ENCODE measurements at regions of chr12 and their contacts with region 1.

Region 1: GRCh38 chr12:6890789-6891645 is 13.6 kb upstream of the LRRC23 start:
- DNase-seq: peak; percentile 74
- H3K4me3 ChIP-seq: peak overlapping the region; percentile 23
- H3K27me3 ChIP-seq: no peaks in the 10 kb centered on the region
- CTCF ChIP-seq: peak; percentile 58

Region 2: DNA sequence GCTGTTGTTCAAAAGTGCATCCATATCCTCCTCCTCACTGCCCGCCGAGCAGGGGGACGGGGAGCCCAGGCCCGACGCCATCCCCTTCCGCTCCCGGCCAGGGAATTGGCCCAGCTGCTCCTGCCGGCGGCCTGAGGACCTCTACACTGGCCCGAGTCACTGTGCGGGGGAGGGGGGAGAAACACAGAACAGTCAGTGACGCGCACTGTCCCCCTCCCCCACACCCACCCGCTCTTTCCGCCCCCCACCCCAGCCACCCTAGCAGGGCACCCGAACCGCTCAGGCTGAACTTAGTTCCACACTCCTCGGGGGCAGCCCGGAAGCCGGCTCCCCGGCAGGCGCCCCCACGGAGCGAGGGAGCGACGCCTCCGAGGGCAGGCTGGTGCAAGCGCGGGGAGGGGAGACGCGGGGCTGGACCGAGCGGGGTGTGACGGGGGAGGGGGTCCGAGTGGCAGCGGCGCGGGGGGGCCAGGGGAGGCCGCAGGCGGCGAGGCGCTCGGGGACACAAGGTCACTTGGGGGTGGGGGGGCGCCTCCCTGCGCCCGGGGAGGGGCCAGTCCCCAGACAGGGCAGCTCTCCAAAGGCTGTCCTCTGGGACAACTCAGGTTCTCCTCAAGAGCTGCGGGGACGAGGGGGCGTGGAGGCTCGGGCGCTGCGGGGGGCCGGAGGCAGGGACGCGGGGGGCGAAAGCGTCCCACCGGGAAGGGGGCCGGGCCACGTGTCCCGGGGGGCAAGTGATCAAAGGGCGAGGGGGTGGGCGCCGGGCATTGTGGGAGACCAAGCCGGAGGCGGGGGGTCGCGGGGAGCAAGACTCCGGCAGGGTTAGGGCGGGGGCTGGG is 284.5 kb before region 1 on chr12:
- CTCF ChIA-PET with region 1: no interaction called
- POLR2A ChIA-PET with region 1: interaction called, 17 read pairs
- DNase-seq: no peak
- H3K4me3 ChIP-seq: peak overlapping the region; percentile 98
- H3K27me3 ChIP-seq: no peaks in the 10 kb centered on the region
- CTCF ChIP-seq: no peak

Region 3: DNA sequence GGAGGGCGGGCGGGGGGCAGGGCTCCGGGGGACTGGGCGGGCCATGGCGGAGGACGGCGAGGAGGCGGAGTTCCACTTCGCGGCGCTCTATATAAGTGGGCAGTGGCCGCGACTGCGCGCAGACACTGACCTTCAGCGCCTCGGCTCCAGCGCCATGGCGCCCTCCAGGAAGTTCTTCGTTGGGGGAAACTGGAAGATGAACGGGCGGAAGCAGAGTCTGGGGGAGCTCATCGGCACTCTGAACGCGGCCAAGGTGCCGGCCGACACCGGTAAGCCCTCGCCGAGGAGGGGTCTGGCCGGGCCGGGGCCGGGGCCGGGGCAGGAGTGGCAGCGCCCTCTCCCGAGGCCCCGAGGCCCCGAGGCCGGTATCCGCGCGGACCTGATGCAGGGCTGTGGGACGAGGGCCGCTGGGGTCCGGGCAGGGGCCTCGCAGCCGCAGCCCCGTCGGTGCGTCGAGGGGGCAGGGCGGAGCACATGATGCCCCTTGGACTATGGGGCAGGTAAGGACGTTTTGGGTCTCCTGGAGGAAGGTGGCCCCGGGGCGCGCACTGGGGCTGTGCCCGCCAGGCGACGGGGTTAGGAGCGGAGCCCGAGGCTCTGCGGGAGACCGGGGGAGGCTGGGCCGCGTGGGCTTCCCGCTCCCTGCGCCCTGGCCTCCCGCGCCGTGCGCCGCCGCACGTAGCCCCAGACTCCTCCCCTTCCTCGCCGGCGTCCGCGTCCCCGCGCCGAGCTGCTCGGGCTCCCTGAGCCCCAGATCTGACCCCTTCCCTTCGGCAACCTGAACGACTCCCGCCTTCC is 23.4 kb before region 1 on chr12 and contains the start of gene TPI1:
- CTCF ChIA-PET with region 1: interaction called, 42 read pairs
- POLR2A ChIA-PET with region 1: interaction called, 7 read pairs
- DNase-seq: no peak
- H3K4me3 ChIP-seq: peak within 1 kb of the TSS; percentile 98
- H3K27me3 ChIP-seq: no peaks in the 10 kb centered on the region
- CTCF ChIP-seq: no peak
- polyA plus RNA-seq, gene TPI1: 2,446 and 2,656 TPM in 2 replicates

Region 4: GRCh38 chr12:6904280-6905278 is 13.6 kb after region 1 on chr12 and contains the start of gene LRRC23:
- CTCF ChIA-PET with region 1: interaction called, 13 read pairs
- POLR2A ChIA-PET with region 1: no interaction called
- DNase-seq: peak; percentile 73
- H3K4me3 ChIP-seq: peak within 1 kb of the TSS; percentile 58
- H3K27me3 ChIP-seq: no peaks in the 10 kb centered on the region
- CTCF ChIP-seq: no peak
- polyA plus RNA-seq, gene LRRC23: 12.7 and 13.3 TPM in 2 replicates

Region 5: DNA sequence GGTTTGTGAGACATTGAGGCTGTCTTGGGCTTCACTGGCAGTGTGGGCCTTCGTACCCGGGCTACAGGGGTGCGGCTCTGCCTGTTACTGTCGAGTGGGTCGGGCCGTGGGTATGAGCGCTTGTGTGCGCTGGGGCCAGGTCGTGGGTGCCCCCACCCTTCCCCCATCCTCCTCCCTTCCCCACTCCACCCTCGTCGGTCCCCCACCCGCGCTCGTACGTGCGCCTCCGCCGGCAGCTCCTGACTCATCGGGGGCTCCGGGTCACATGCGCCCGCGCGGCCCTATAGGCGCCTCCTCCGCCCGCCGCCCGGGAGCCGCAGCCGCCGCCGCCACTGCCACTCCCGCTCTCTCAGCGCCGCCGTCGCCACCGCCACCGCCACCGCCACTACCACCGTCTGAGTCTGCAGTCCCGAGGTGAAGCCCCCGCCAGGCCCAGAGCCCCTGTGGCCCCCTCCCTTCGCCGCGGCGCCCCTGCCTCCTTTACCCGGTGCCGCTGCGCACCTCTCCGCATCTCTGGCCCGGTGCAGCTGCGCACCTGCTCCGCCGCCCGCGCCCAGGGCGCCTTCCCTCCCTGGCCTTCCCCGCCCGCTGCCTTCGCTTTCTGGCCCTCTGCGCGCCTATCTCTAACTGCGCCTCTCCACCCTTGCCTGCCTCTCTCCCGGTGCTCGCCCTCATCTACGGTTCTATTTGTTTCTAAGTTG is 23.4 kb after region 1 on chr12 and contains the start of gene ENO2:
- CTCF ChIA-PET with region 1: interaction called, 11 read pairs
- POLR2A ChIA-PET with region 1: no interaction called
- DNase-seq: no peak
- H3K4me3 ChIP-seq: peak within 1 kb of the TSS; percentile 91
- H3K27me3 ChIP-seq: no peaks in the 10 kb centered on the region
- CTCF ChIP-seq: no peak
- polyA plus RNA-seq, gene ENO2: 27.9 and 29.7 TPM in 2 replicates

Measured in BJ (cell line).